H1 (cell line): ENCODE measurements at regions of chr18 and their contacts with region 1.

Region 1: GRCh38 chr18:12271376-12272235 is 17.4 kb downstream of the CIDEA start:
- DNase-seq: peak in 1 of 2 experiments; percentile 89
- H3K4me3 ChIP-seq: peak overlapping the region; percentile 40 to 67 (median 52); a peak in 6 of 8 replicates
- H3K27ac ChIP-seq: no peak overlapping the region
- H3K4me1 ChIP-seq: no peaks in the 10 kb centered on the region; a peak in 1 of 7 replicates
- H3K27me3 ChIP-seq: no peaks in the 10 kb centered on the region
- CTCF ChIP-seq: peak in 2 of 3 experiments; percentile 40 to 83; a peak in 3 of 4 replicates
- EP300 ChIP-seq: no peak
- POLR2A ChIP-seq: no peak; a peak in 2 of 3 replicates
- RAD21 ChIP-seq: peak; percentile 17 to 23; a peak in 2 of 4 replicates

Region 2: GRCh38 chr18:11714244-11714918 is 557.2 kb before region 1 on chr18:
- CTCF ChIA-PET with region 1: no interaction called
- POLR2A ChIA-PET with region 1: no interaction called
- DNase-seq: no peak
- H3K4me3 ChIP-seq: peak overlapping the region in 1 of 4 experiments; percentile 29; a peak in 2 of 8 replicates
- H3K27ac ChIP-seq: no peak overlapping the region
- H3K4me1 ChIP-seq: peaks cover 0 to 13% (median 1%) of the 10 kb centered on the region in 4 experiments; a peak in 1 of 7 replicates
- H3K27me3 ChIP-seq: no peaks in the 10 kb centered on the region
- CTCF ChIP-seq: no peak
- EP300 ChIP-seq: no peak
- POLR2A ChIP-seq: no peak
- RAD21 ChIP-seq: no peak

Region 3: GRCh38 chr18:12246849-12247808 is 24.5 kb before region 1 on chr18:
- CTCF ChIA-PET with region 1: interaction called, 10 read pairs
- POLR2A ChIA-PET with region 1: no interaction called
- DNase-seq: peak; percentile 44 to 85
- H3K4me3 ChIP-seq: no peak overlapping the region
- H3K27ac ChIP-seq: no peak overlapping the region
- H3K4me1 ChIP-seq: peaks cover 0 to 2% (median 0%) of the 10 kb centered on the region in 4 experiments; a peak in 2 of 7 replicates
- H3K27me3 ChIP-seq: peaks cover 0 to 23% (median 13%) of the 10 kb centered on the region in 4 experiments; a peak in 6 of 7 replicates
- CTCF ChIP-seq: peak in 2 of 3 experiments; percentile 84 to 85; a peak in 3 of 4 replicates
- EP300 ChIP-seq: no peak
- POLR2A ChIP-seq: no peak
- RAD21 ChIP-seq: peak; percentile 82 to 83

Region 4: GRCh38 chr18:12254136-12254829 is 17.3 kb before region 1 on chr18 and contains the start of gene CIDEA:
- CTCF ChIA-PET with region 1: interaction called, 22 read pairs
- POLR2A ChIA-PET with region 1: interaction called, 3 read pairs
- DNase-seq: peak in 1 of 2 experiments; percentile 76
- H3K4me3 ChIP-seq: peak within 1 kb of the TSS; percentile 39 to 67 (median 46)
- H3K27ac ChIP-seq: no peak within 1 kb of the TSS
- H3K4me1 ChIP-seq: peaks cover 2 to 11% (median 6%) of the 10 kb centered on the region in 4 experiments
- H3K27me3 ChIP-seq: peaks cover 38 to 63% (median 55%) of the 10 kb centered on the region in 4 experiments
- CTCF ChIP-seq: no peak
- EP300 ChIP-seq: no peak
- POLR2A ChIP-seq: no peak
- RAD21 ChIP-seq: no peak
- total RNA-seq, gene CIDEA: not detected in 2 replicates

Region 5: GRCh38 chr18:12485479-12486105 is 214.0 kb after region 1 on chr18:
- CTCF ChIA-PET with region 1: no interaction called
- POLR2A ChIA-PET with region 1: no interaction called
- DNase-seq: no peak
- H3K4me3 ChIP-seq: no peak overlapping the region
- H3K27ac ChIP-seq: no peak overlapping the region
- H3K4me1 ChIP-seq: peaks cover 0 to under 1% (median 0%) of the 10 kb centered on the region in 4 experiments; a peak in 1 of 7 replicates
- H3K27me3 ChIP-seq: no peaks in the 10 kb centered on the region
- CTCF ChIP-seq: no peak
- EP300 ChIP-seq: no peak
- POLR2A ChIP-seq: no peak
- RAD21 ChIP-seq: no peak